Naive thymus-derived CD4-positive, alpha-beta T cell (primary cell): ENCODE measurements at regions of chr14 and their contacts with region 1.

Region 1: GRCh38 chr14:99271951-99272631 is at the start of gene BCL11B:
- DNase-seq: peak; percentile 63 to 94 (median 91)
- ATAC-seq: peak; percentile 89
- H3K4me3 ChIP-seq: peak within 1 kb of the TSS; percentile 94
- H3K4me3 Mint-ChIP-seq: peak within 1 kb of the TSS; percentile 92 to 100 (median 98)
- H3K27ac ChIP-seq: peak within 1 kb of the TSS; percentile 98
- H3K27ac Mint-ChIP-seq: peak within 1 kb of the TSS; percentile 91 to 99 (median 98)
- H3K4me1 ChIP-seq: peaks cover 6 to 12% of the 10 kb centered on the region in 2 donors
- H3K4me1 Mint-ChIP-seq: peaks cover 25 to 46% (median 34%) of the 10 kb centered on the region in 7 donors
- H3K27me3 ChIP-seq: no peaks in the 10 kb centered on the region
- H3K27me3 Mint-ChIP-seq: peaks cover 0 to 26% (median 0%) of the 10 kb centered on the region in 5 donors
- total RNA-seq, gene BCL11B: 96.3 to 269 (median 223) TPM

Region 2: DNA sequence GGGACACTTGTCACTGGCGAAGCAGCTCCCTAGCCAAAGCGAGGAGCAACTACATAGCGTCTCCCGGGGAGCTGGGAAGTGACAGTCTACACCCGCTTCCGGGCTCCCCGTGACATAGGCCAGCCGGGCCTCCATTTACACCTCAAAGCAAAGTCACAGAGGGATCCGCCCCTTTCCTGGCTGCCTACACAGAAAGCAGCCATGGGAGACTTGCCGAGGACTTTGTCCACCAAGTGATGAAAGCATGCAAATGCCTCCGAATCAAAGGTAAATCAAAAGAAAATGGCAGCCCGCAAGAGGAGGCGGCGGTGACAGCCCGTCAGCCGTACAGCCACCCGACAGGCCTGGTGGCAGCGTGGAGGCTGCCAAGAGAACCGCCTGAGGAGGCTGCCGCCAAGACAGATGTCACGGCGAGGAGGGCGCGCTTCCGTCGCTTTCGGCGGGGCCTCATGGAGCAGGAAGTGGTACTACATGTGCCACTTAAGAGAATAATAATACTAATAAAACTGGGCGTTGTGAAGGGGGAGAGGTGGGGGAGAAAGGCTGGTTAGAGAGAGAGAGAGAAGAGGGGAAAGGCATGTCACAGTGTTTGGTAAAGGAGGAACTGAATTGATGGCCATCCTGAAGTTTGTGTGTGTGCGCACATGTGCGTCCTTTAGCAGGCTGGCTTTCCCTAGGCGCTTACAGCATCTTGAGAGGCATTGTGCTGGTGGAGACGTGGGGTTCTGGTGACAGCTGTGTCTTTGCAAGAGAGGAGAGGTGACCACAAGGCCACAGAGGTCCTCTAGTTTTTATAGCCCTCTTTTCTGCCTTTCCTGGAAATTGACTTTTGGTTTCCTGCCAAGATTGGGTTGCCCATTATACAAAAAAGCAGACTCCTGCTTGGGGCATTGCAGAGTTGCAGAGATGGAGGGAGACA is 1813.2 kb before region 1 on chr14:
- CTCF ChIA-PET with region 1: no interaction called
- POLR2A ChIA-PET with region 1: no interaction called
- intact Hi-C with region 1: loop called (anchors 2 kb)
- DNase-seq: peak; percentile 53 to 87 (median 81)
- ATAC-seq: peak; percentile 91
- H3K4me3 ChIP-seq: peak overlapping the region; percentile 85
- H3K4me3 Mint-ChIP-seq: peak overlapping the region; percentile 89 to 99 (median 92)
- H3K27ac ChIP-seq: peak overlapping the region; percentile 79
- H3K27ac Mint-ChIP-seq: peak overlapping the region; percentile 96 to 99 (median 98)
- H3K4me1 ChIP-seq: peaks cover 30 to 45% of the 10 kb centered on the region in 2 donors
- H3K4me1 Mint-ChIP-seq: peaks cover 33 to 79% (median 53%) of the 10 kb centered on the region in 7 donors
- H3K27me3 ChIP-seq: no peaks in the 10 kb centered on the region
- H3K27me3 Mint-ChIP-seq: no peaks in the 10 kb centered on the region

Region 3: DNA sequence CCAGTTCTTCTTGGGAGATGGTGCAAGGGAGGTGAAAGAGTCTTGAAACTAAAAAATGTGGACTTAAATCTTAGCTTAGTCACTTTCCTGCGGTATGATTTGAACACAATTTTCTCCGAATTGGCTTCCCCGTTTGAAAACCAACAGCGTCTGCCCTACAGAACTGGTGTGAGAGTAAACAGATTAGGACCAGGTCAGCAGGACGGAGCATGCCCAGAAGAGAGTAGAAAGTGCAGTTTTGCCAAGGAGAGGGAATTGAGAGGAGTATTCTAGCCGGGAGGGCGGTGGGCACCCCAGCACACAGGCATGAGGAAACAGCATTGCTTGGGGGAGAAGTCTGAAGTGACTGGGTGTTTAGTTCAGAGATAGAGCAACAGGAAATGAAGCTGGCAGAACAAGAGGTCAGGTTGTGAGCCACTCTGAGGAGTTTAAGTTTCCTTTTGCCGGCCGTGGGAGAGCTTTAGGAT is 1547.8 kb before region 1 on chr14:
- CTCF ChIA-PET with region 1: no interaction called
- POLR2A ChIA-PET with region 1: interaction called, 4 read pairs
- intact Hi-C with region 1: loop called (anchors 2 to 5 kb)
- DNase-seq: peak in 8 of 9 donors; percentile 38 to 67 (median 59)
- ATAC-seq: peak; percentile 77
- H3K4me3 ChIP-seq: peak overlapping the region; percentile 57
- H3K4me3 Mint-ChIP-seq: peak overlapping the region; percentile 78 to 92 (median 84)
- H3K27ac ChIP-seq: peak overlapping the region; percentile 80
- H3K27ac Mint-ChIP-seq: peak overlapping the region; percentile 92 to 99 (median 97)
- H3K4me1 ChIP-seq: peaks cover 28 to 72% of the 10 kb centered on the region in 2 donors
- H3K4me1 Mint-ChIP-seq: peaks cover 51 to 94% (median 86%) of the 10 kb centered on the region in 7 donors
- H3K27me3 ChIP-seq: no peaks in the 10 kb centered on the region
- H3K27me3 Mint-ChIP-seq: no peaks in the 10 kb centered on the region

Region 4: GRCh38 chr14:97994020-97994531 is 1278.0 kb before region 1 on chr14:
- CTCF ChIA-PET with region 1: interaction called, 3 read pairs
- POLR2A ChIA-PET with region 1: interaction called, 9 read pairs
- intact Hi-C with region 1: loop called in 1 of 2 experiments (anchors 1 kb)
- DNase-seq: peak in 8 of 9 donors; percentile 34 to 86 (median 78)
- ATAC-seq: peak; percentile 91
- H3K4me3 ChIP-seq: peak overlapping the region; percentile 33
- H3K4me3 Mint-ChIP-seq: peak overlapping the region; percentile 17 to 77 (median 65)
- H3K27ac ChIP-seq: peak overlapping the region; percentile 63
- H3K27ac Mint-ChIP-seq: peak overlapping the region; percentile 89 to 98 (median 93)
- H3K4me1 ChIP-seq: peaks cover 37 to 80% of the 10 kb centered on the region in 2 donors
- H3K4me1 Mint-ChIP-seq: peaks cover 37 to 89% (median 87%) of the 10 kb centered on the region in 7 donors
- H3K27me3 ChIP-seq: no peaks in the 10 kb centered on the region
- H3K27me3 Mint-ChIP-seq: no peaks in the 10 kb centered on the region

Region 5: DNA sequence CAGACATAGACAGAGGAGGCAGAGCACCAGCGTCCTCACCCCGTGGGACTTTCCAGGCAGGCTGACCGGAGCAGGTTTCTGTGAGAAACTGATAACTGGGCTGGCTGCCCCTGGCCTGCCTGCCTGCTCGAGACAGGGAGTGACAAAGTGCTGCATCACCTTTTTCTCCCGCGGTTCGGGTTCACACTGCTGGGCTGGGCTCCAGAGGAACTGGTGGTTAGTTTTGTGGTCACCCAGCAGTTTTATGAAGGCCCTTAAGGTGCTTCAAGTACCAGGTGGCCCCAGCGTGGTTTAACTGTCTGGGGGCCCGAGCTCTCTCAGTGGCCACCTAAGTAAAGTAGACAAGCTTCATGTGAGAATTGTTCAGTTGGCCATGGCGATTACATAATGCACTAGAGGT is 1073.7 kb before region 1 on chr14:
- CTCF ChIA-PET with region 1: interaction called, 6 read pairs
- POLR2A ChIA-PET with region 1: interaction called, 323 read pairs
- intact Hi-C with region 1: loop called in 1 of 2 experiments (anchors 1 kb)
- DNase-seq: peak in 4 of 9 donors; percentile 25 to 43 (median 32)
- ATAC-seq: peak; percentile 67
- H3K4me3 ChIP-seq: peak overlapping the region; percentile 18
- H3K4me3 Mint-ChIP-seq: peak overlapping the region; percentile 18 to 84 (median 78)
- H3K27ac ChIP-seq: peak overlapping the region; percentile 33
- H3K27ac Mint-ChIP-seq: peak overlapping the region; percentile 74 to 100 (median 97)
- H3K4me1 ChIP-seq: peaks cover 43 to 80% of the 10 kb centered on the region in 2 donors
- H3K4me1 Mint-ChIP-seq: peaks cover 28 to 95% (median 86%) of the 10 kb centered on the region in 7 donors
- H3K27me3 ChIP-seq: no peaks in the 10 kb centered on the region
- H3K27me3 Mint-ChIP-seq: no peaks in the 10 kb centered on the region

Region 6: GRCh38 chr14:98984719-98985041 is 287.4 kb before region 1 on chr14:
- CTCF ChIA-PET with region 1: no interaction called
- POLR2A ChIA-PET with region 1: no interaction called
- intact Hi-C with region 1: loop called (anchors 5 to 10 kb)
- DNase-seq: peak; percentile 27 to 76 (median 67)
- ATAC-seq: peak; percentile 96
- H3K4me3 ChIP-seq: peak overlapping the region; percentile 17
- H3K4me3 Mint-ChIP-seq: peak overlapping the region; percentile 51 to 86 (median 78)
- H3K27ac ChIP-seq: peak overlapping the region; percentile 56
- H3K27ac Mint-ChIP-seq: peak overlapping the region; percentile 74 to 97 (median 94)
- H3K4me1 ChIP-seq: peaks cover 29 to 32% of the 10 kb centered on the region in 2 donors
- H3K4me1 Mint-ChIP-seq: peaks cover 27 to 65% (median 48%) of the 10 kb centered on the region in 7 donors
- H3K27me3 ChIP-seq: no peaks in the 10 kb centered on the region
- H3K27me3 Mint-ChIP-seq: no peaks in the 10 kb centered on the region

Region 7: GRCh38 chr14:99287269-99287942 is 15.3 kb after region 1 on chr14:
- CTCF ChIA-PET with region 1: no interaction called
- POLR2A ChIA-PET with region 1: no interaction called
- intact Hi-C with region 1: no loop called
- DNase-seq: no peak
- ATAC-seq: peak; percentile 79
- H3K4me3 ChIP-seq: peak overlapping the region; percentile 41
- H3K4me3 Mint-ChIP-seq: peak overlapping the region in 3 of 10 donors; percentile 39 to 76 (median 56)
- H3K27ac ChIP-seq: no peak overlapping the region
- H3K27ac Mint-ChIP-seq: peak overlapping the region in 3 of 9 donors; percentile 31 to 69 (median 54)
- H3K4me1 ChIP-seq: peaks cover 0 to 21% of the 10 kb centered on the region in 2 donors
- H3K4me1 Mint-ChIP-seq: peaks cover 0 to 17% (median 3%) of the 10 kb centered on the region in 7 donors
- H3K27me3 ChIP-seq: no peaks in the 10 kb centered on the region
- H3K27me3 Mint-ChIP-seq: peaks cover 0 to 8% (median 6%) of the 10 kb centered on the region in 5 donors